Ovary (tissue), 10 donors: ENCODE measurements at regions of chr7 and their contacts with region 1.

Region 1: DNA sequence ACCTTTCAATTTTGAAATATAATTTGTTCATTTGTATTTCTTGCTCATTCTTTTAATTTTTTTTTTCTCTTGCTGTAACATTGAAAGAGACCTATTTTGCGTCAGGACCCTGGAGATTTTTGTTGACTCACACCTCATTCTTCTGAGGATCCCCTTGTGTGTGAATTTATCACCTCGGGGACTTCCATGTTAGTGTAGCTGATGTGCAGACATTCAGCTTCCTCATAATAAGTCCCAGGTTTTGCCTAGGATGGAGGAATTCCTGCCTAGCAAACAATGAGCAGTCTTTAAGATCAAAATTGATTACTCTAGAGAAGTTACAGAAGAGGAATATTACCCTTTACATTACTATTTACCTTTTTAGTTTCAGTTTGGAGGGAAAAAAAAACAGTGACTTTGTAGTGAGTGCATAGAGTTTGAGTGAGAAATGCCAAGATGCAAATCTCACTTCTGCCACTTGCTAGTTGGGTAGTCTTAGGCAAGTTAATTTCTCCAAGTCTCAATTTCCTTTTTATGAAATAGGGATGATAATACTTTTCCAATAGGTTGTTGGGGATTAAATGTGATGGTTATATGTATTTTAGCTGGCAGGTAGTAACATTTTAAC is 14.3 kb downstream of the TES start:
- DNase-seq: no peak
- H3K4me3 ChIP-seq: no peak overlapping the region
- H3K27ac ChIP-seq: no peak overlapping the region
- H3K4me1 ChIP-seq: no peaks in the 10 kb centered on the region
- H3K27me3 ChIP-seq: no peaks in the 10 kb centered on the region
- CTCF ChIP-seq: no peak
- EP300 ChIP-seq: no peak
- POLR2A ChIP-seq: no peak

Region 2: GRCh38 chr7:116185956-116186355 is 38.6 kb before region 1 on chr7:
- intact Hi-C with region 1: loop called in 1 of 4 experiments (anchors 5 kb)
- DNase-seq: no peak
- H3K4me3 ChIP-seq: no peak overlapping the region
- H3K27ac ChIP-seq: no peak overlapping the region
- H3K4me1 ChIP-seq: no peaks in the 10 kb centered on the region
- H3K27me3 ChIP-seq: no peaks in the 10 kb centered on the region
- CTCF ChIP-seq: no peak
- EP300 ChIP-seq: no peak
- POLR2A ChIP-seq: no peak